PC-9 (cell line): ENCODE measurements at regions of chr11 and their contacts with region 1.

Region 1: DNA sequence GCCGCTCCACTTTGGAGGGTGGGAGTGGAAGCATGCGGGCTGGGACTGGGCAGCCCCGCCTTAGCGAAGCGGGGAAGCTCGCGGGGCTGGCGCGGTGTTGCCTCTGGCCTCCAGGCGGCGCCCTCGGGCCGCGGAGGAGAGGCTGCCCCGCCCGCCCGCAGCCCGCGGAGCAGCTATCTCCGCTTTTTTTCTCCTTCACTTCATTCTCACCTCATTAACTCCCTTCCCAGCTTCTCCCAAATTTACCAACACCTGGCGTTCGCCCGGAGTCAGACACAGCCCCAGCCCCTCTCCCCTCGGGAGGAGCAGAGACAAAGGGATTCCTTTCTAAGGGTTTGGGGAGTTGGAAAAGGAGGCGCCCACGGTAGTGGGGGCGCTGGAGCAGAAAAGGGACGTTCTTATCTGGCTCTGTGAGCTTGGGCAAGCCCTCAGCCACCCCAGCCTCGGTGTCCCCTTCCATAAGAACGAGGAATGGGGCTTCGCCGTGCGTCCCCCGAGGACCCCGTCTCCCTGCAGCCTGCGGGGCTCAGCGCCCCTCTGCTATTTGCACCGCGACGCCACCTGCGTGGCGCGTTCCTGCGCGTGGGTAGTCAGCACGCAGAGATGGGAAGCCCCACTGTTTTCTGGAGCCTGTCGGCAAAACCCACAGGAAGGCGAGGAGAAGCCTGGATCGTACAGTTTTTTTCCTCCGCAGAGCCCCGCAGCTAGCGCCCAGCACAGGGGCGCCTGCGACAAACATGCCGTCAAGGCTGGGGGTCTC is 1.5 kb upstream of the WNT11 start:
- DNase-seq: peak; percentile 76 to 89
- H3K4me3 ChIP-seq: peak overlapping the region; percentile 73
- H3K27ac ChIP-seq: no peak overlapping the region
- H3K4me1 ChIP-seq: peaks cover 24% of the 10 kb centered on the region
- H3K27me3 ChIP-seq: peaks cover 17% of the 10 kb centered on the region
- CTCF ChIP-seq: peak; percentile 96

Region 2: DNA sequence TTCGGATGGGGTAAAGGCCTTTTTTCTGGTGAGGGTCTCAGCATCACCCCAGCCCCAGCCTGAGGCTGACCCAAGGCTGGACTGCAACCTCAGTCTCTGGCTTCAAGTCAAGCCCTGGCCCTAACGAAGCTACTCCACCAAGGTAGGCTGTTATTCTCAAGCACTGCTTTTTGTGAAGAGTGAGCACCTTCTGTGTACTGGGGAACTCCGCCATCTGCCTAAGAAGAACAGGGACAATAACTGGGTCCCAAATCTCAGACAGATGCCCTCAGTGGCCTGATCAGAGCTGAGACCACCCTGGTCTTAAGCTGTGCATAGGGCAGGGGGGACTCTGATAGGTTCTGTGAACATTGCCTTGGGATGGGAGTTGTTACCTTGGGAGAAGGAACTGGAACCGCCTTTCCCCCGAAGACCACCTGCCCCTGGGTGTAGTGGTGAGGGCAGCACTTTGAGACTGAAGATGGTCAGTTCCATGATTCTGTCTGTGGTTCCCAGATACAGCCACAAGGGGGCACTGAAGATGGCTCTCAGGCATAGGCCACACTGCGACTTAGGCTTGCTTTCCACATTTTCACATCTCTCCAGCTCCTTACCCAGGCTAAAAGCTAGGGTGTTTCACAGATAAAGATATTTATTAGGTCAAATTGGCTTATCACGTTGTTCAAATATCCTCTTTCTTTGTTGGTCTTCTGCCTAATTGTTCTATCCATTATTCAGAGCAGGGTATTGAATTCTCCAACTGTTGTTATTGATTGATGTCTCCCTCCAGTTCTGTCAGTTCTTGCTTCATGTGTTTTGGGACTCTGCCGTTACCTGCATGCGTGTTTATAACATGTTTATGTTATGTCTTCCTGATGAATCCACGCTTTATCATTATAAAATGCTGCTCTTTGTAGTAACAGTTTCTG is 404.7 kb before region 1 on chr11:
- CTCF ChIA-PET with region 1: no interaction called
- POLR2A ChIA-PET with region 1: interaction called, 3 read pairs
- intact Hi-C with region 1: loop called (anchors 2 kb)
- DNase-seq: peak; percentile 54 to 65
- H3K4me3 ChIP-seq: no peak overlapping the region
- H3K27ac ChIP-seq: no peak overlapping the region
- H3K4me1 ChIP-seq: no peaks in the 10 kb centered on the region
- H3K27me3 ChIP-seq: no peaks in the 10 kb centered on the region
- CTCF ChIP-seq: peak; percentile 97

Region 3: GRCh38 chr11:76152086-76152681 is 55.6 kb before region 1 on chr11:
- CTCF ChIA-PET with region 1: interaction called, 5 read pairs
- POLR2A ChIA-PET with region 1: no interaction called
- intact Hi-C with region 1: loop called (anchors 1 kb)
- DNase-seq: peak in 1 of 2 experiments; percentile 76
- H3K4me3 ChIP-seq: no peak overlapping the region
- H3K27ac ChIP-seq: peak overlapping the region; percentile 88
- H3K4me1 ChIP-seq: peaks cover 37% of the 10 kb centered on the region
- H3K27me3 ChIP-seq: no peaks in the 10 kb centered on the region
- CTCF ChIP-seq: peak; percentile 72

Region 4: DNA sequence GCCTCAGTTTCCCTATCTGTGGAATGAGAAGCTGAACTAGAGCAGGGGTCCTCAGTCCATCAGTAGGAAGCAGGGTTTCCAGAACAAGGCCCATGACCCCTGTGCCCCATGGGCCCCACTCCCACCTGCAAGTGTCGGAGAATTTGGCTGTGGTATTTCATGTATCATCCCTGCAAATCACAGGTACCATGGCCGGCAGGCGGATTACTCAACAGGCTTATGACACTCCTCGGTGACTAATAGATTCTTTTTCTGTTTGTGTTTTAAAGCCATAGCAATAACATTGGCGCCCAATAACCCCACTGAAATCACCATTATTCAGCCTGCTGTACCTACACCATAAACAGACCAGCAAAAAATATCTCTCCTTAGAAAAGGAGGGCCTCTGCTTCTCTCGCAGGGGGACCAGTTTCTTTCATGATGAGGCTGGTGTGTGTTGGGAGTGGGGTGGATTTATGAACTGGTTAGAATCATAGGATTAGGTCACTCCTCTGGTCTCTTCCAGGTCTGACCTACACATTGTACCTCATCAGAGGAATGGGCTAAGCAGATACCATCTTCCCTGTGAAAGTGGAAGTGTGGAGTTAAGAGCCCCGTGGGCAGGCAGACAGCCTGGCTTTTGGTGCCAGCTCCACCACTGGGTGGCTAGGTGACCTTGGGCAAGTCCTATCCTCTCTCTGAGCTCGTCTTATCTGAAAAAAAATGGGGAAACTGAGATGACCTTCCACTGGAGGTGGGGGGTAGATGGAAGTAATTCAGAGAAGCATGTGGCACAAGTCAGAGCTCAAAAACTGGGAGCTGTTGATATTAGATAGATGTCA is 58.7 kb after region 1 on chr11:
- CTCF ChIA-PET with region 1: no interaction called
- POLR2A ChIA-PET with region 1: no interaction called
- intact Hi-C with region 1: loop called (anchors 2 kb)
- DNase-seq: peak; percentile 75 to 91
- H3K4me3 ChIP-seq: no peak overlapping the region
- H3K27ac ChIP-seq: peak overlapping the region; percentile 54
- H3K4me1 ChIP-seq: peaks cover 19% of the 10 kb centered on the region
- H3K27me3 ChIP-seq: no peaks in the 10 kb centered on the region
- CTCF ChIP-seq: no peak

Region 5: GRCh38 chr11:76318744-76319384 is 111.0 kb after region 1 on chr11:
- CTCF ChIA-PET with region 1: interaction called, 16 read pairs
- POLR2A ChIA-PET with region 1: no interaction called
- intact Hi-C with region 1: loop called (anchors 1 kb)
- DNase-seq: peak; percentile 58 to 82
- H3K4me3 ChIP-seq: no peak overlapping the region
- H3K27ac ChIP-seq: no peak overlapping the region
- H3K4me1 ChIP-seq: 0 out of 2 replicates have a peak, but pooled peaks cover 6% of the 10 kb centered on the region
- H3K27me3 ChIP-seq: no peaks in the 10 kb centered on the region
- CTCF ChIP-seq: peak; percentile 99

Region 6: DNA sequence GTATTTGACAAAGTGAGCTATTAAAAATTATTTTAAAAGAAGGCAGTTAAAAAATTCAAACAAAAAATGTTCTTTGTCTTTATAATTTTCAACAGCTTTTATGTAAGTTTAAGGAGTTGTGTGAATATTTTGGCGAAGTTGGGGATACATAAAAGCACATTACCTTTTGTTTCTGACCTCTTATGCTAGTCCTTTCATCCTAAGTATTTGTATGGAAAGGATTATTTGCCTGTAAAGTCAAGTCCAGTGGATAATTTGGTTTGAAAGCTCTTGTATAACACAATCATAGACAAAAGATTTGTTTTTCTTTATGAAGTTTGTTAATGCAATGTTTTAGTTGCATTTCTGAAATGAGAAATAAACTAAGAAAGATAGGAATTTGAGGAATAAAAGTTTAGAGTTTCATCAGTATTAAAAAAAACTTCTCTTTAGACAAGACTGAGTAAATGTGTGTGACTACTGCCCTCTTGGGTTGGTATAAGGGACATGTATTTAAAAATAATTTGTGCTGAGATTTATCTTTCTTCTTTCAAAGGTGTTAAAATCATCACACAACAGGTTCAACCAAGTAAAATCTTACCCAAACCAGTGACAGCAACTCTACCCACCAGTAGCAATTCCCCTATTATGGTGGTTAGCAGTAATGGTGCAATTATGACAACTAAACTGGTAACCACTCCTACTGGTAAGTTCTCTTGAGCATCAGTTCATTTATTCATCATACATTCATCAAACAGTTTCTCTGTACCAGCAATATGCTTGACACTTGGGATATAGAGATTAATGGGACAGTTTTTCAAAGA is 305.2 kb after region 1 on chr11:
- CTCF ChIA-PET with region 1: interaction called, 8 read pairs
- POLR2A ChIA-PET with region 1: no interaction called
- intact Hi-C with region 1: loop called (anchors 5 kb)
- DNase-seq: peak in 1 of 2 experiments; percentile 38
- H3K4me3 ChIP-seq: no peak overlapping the region
- H3K27ac ChIP-seq: 0 out of 2 replicates have a peak overlapping the region, but pooled peaks have one; percentile 8
- H3K4me1 ChIP-seq: no peaks in the 10 kb centered on the region
- H3K27me3 ChIP-seq: no peaks in the 10 kb centered on the region
- CTCF ChIP-seq: peak; percentile 69

Region 7: GRCh38 chr11:76551400-76551799 is 343.6 kb after region 1 on chr11:
- CTCF ChIA-PET with region 1: no interaction called
- POLR2A ChIA-PET with region 1: no interaction called
- intact Hi-C with region 1: no loop called
- DNase-seq: no peak
- H3K4me3 ChIP-seq: no peak overlapping the region
- H3K27ac ChIP-seq: no peak overlapping the region
- H3K4me1 ChIP-seq: no peaks in the 10 kb centered on the region
- H3K27me3 ChIP-seq: no peaks in the 10 kb centered on the region
- CTCF ChIP-seq: peak; percentile 56; the same call in 1 of the 2 replicates